Mammary epithelial cell (primary cell): ENCODE measurements at regions of chr17 and their contacts with region 1.

Region 1: DNA sequence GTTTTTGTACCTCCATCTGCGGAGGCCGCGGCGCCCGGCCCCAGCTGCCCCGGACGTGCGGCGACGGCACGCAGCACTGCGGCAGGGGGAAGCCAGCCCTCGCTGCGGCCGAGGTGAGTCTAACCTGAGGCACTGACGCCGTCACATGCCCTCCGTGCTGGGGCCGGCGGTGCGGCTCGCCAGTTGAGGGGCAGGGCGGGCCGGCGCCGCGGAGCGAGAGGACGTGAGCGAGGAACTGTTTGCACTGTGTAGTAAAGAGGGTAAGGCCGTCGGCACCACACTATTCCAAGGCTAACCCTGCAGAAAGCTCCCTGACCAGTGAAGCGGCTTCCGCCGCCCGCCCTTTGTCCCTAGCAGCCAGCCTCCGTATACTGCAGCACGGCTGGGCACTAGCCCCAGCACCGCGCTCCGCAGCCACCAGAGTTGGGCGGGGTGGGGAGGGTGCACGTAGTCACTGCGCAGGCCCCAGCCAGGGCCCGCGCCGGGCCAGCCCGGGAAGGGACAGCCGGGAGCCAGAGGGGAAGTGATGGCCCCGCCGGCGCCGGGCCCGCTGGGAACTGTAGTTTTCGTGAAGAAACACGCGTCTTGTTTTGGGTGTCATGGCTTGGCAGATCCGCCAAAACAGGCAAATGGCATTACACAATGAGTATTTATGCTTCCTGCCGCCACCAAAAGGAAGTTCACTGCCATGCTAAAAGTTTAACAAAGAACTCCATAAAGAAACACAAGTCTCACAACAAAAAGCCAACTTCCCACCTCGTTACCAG is 580 bp upstream of the KANSL1 start:
- DNase-seq: peak; percentile 91
- H3K4me3 ChIP-seq: peak overlapping the region; percentile 78 to 86 (median 83)
- H3K27ac ChIP-seq: peak overlapping the region; percentile 61
- H3K4me1 ChIP-seq: peaks cover 24% of the 10 kb centered on the region
- H3K27me3 ChIP-seq: no peaks in the 10 kb centered on the region
- CTCF ChIP-seq: no peak

Region 2: DNA sequence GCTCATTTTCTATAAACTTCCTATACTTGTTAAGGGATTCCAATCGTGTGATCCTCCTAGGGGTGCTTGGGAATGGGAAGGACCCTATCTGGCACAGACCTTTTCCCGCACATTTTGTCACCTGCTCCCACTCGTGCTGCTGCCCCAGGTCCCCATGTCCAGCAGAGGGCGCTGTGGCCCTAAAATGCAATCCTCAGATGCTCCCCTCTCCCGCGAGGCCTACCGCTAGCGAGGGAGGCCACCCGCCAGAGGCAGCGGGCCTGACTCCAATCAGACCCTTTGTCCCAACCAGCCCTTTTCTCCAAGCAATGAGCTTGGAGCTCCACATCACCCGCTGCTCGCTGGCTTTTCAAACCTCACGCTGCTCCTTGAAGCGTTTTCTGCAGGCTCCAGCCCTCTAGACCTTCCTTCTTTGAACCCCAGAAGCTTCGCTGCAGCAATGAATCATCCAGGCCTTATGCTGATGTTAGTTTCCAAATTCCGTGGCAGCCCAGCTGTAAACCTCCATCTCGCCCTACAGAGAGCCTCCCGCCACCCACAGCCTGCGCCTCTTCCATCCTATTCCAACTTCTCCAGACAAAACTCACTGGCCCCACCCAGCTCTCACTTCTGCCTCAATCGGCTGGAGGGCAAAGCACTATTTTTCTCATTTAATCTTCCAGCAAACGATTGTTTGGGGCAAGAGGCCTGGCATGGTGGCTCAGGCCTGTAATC is 1660.1 kb before region 1 on chr17:
- CTCF ChIA-PET with region 1: interaction called, 10 read pairs
- dilution Hi-C with region 1: no loop called
- in situ Hi-C with region 1: no loop called
- intact Hi-C with region 1: no loop called
- DNase-seq: peak; percentile 52
- H3K4me3 ChIP-seq: no peak overlapping the region
- H3K27ac ChIP-seq: no peak overlapping the region
- H3K4me1 ChIP-seq: no peaks in the 10 kb centered on the region
- H3K27me3 ChIP-seq: no peaks in the 10 kb centered on the region
- CTCF ChIP-seq: peak; percentile 91 to 97

Region 3: DNA sequence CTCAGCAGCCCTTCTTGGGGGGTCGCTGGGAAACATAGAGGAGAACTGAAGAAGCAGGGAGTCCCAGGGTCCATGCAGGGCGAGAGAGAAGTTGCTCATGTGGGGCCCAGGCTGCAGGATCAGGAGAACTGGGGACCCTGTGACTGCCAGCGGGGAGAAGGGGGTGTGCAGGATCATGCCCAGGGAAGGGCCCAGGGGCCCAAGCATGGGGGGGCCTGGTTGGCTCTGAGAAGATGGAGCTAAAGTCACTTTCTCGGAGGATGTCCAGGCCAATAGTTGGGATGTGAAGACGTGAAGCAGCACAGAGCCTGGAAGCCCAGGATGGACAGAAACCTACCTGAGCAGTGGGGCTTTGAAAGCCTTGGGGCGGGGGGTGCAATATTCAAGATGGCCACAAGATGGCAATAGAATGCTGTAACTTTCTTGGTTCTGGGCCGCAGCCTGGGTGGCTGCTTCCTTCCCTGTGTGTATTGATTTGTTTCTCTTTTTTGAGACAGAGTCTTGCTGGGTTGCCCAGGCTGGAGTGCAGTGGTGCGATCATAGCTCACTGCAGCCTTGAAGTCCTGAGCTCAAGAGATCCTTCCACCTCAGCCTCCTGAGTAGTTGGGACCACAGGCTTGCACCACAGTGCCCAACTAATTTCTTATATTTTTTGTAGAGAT is 191.4 kb before region 1 on chr17:
- CTCF ChIA-PET with region 1: no interaction called
- dilution Hi-C with region 1: no loop called
- in situ Hi-C with region 1: no loop called
- intact Hi-C with region 1: loop called (anchors 5 kb)
- DNase-seq: peak; percentile 41
- H3K4me3 ChIP-seq: no peak overlapping the region
- H3K27ac ChIP-seq: no peak overlapping the region
- H3K4me1 ChIP-seq: no peaks in the 10 kb centered on the region
- H3K27me3 ChIP-seq: no peaks in the 10 kb centered on the region
- CTCF ChIP-seq: peak; percentile 83 to 88

Region 4: GRCh38 chr17:46061435-46061834 is 132.4 kb before region 1 on chr17:
- CTCF ChIA-PET with region 1: no interaction called
- dilution Hi-C with region 1: no loop called
- in situ Hi-C with region 1: no loop called
- intact Hi-C with region 1: loop called (anchors 1 kb)
- DNase-seq: peak; percentile 17
- H3K4me3 ChIP-seq: no peak overlapping the region
- H3K27ac ChIP-seq: no peak overlapping the region
- H3K4me1 ChIP-seq: peaks cover 15% of the 10 kb centered on the region
- H3K27me3 ChIP-seq: no peaks in the 10 kb centered on the region
- CTCF ChIP-seq: peak; percentile 18 to 37

Region 5: DNA sequence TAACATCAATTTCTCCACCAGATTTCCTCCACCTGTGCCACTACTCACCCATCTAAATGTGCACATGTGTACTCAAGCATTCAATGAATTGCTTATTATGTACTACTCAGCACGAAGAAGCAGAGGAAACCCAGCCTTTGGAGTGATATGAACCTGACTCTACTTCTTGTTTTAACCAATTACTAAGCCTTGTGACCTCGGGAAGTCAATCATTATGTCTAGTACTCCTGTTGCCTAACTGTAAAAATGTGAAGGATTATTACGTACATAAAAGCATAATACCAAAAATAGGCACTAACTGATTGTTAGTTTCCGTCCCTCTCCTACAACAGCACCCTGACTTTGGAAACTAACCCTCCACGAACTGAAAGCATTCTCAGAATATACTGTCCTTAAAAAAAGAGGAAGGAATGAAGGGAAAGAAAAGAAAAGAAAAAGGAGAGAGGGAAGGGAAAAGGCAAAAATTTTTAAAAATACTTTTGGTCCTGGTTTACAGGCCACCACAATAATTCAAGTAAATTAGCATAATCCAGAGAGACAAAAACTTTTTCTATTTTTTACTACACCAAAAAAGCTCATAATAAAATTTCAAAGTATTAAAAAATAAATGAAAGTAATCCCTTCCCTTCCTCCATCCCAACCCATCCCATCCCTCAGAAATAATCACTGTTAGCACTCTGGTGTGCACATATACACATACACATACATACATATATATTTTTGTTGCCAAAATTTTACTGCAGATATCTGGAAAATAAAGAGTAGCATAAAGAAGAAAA is 54.2 kb before region 1 on chr17:
- CTCF ChIA-PET with region 1: no interaction called
- dilution Hi-C with region 1: no loop called
- in situ Hi-C with region 1: no loop called
- intact Hi-C with region 1: loop called (anchors 5 kb)
- DNase-seq: no peak
- H3K4me3 ChIP-seq: no peak overlapping the region
- H3K27ac ChIP-seq: no peak overlapping the region
- H3K4me1 ChIP-seq: peaks cover 5% of the 10 kb centered on the region
- H3K27me3 ChIP-seq: no peaks in the 10 kb centered on the region
- CTCF ChIP-seq: no peak

Region 6: GRCh38 chr17:46266656-46267544 is 73.1 kb after region 1 on chr17:
- CTCF ChIA-PET with region 1: no interaction called
- dilution Hi-C with region 1: no loop called
- in situ Hi-C with region 1: no loop called
- intact Hi-C with region 1: loop called (anchors 5 kb)
- DNase-seq: peak; percentile 85
- H3K4me3 ChIP-seq: peak overlapping the region; percentile 53 to 68 (median 66)
- H3K27ac ChIP-seq: peak overlapping the region; percentile 64
- H3K4me1 ChIP-seq: peaks cover 24% of the 10 kb centered on the region
- H3K27me3 ChIP-seq: no peaks in the 10 kb centered on the region
- CTCF ChIP-seq: no peak